ENCODE measurements at regions of chr1 and their contacts with region 1.

Region 1: GRCh38 chr1:66374561-66375111 is 159.3 kb upstream of the SGIP1 start:
- DNase-seq: no peak
- H3K4me3 Mint-ChIP-seq: peak overlapping the region; percentile 63
- H3K27ac Mint-ChIP-seq: peak overlapping the region; percentile 96
- H3K4me1 Mint-ChIP-seq: peaks cover 60% of the 10 kb centered on the region
- H3K27me3 Mint-ChIP-seq: no peaks in the 10 kb centered on the region

Region 2: GRCh38 chr1:65230731-65231481 is 1143.7 kb before region 1 on chr1:
- intact Hi-C with region 1: loop called (anchors 5 kb)
- DNase-seq: no peak
- H3K4me3 Mint-ChIP-seq: peak overlapping the region; percentile 26
- H3K27ac Mint-ChIP-seq: peak overlapping the region; percentile 79
- H3K4me1 Mint-ChIP-seq: peaks cover 34% of the 10 kb centered on the region
- H3K27me3 Mint-ChIP-seq: no peaks in the 10 kb centered on the region

Region 3: GRCh38 chr1:66242646-66243547 is 131.7 kb before region 1 on chr1:
- intact Hi-C with region 1: loop called (anchors 1 kb)
- DNase-seq: peak; percentile 61
- H3K4me3 Mint-ChIP-seq: no peak overlapping the region
- H3K27ac Mint-ChIP-seq: no peak overlapping the region
- H3K4me1 Mint-ChIP-seq: peaks cover 27% of the 10 kb centered on the region
- H3K27me3 Mint-ChIP-seq: peaks cover 12% of the 10 kb centered on the region

Region 4: GRCh38 chr1:66300972-66301451 is 73.6 kb before region 1 on chr1:
- intact Hi-C with region 1: loop called (anchors 1 kb)
- DNase-seq: peak; percentile 21
- H3K4me3 Mint-ChIP-seq: peak overlapping the region; percentile 68
- H3K27ac Mint-ChIP-seq: peak overlapping the region; percentile 82
- H3K4me1 Mint-ChIP-seq: peaks cover 40% of the 10 kb centered on the region
- H3K27me3 Mint-ChIP-seq: no peaks in the 10 kb centered on the region

Region 5: DNA sequence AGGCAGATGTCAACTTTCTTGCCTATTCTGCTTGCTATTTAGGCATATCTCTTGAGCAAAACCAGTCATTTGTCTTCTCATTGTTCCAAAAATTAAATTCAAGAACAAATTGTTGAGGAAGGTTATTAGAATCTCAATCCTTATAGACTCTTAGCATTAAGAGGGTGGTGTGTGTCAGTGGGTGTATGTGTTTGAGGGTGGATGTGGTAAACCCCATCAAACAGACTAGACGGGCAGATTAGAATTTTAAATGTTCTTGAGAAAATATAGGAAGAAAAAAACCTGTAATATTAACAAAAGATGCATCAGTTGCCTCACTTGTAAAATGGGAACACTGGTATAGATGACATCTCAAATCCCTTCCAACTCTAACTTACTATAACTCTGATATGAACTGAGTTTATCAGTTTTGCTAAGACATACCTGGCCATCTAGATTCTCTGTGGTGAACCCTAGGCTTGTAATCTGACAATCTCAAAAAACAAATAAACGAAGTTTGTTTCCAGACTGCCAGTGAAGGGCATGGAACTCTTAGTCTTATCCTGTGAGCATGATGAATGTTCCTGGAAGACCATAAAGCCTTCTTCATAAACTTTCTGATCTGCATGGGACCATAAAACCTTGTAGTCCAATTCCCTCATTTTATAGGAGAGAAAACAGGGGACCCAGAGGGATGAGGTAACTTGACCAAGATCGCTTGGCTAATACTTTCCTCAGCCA is 17.0 kb before region 1 on chr1:
- intact Hi-C with region 1: loop called (anchors 1 kb)
- DNase-seq: no peak
- H3K4me3 Mint-ChIP-seq: peak overlapping the region; percentile 5
- H3K27ac Mint-ChIP-seq: no peak overlapping the region
- H3K4me1 Mint-ChIP-seq: peaks cover 41% of the 10 kb centered on the region
- H3K27me3 Mint-ChIP-seq: peaks cover 3% of the 10 kb centered on the region

Region 6: GRCh38 chr1:66446261-66447001 is 71.8 kb after region 1 on chr1:
- intact Hi-C with region 1: loop called (anchors 1 kb)
- DNase-seq: peak; percentile 12
- H3K4me3 Mint-ChIP-seq: peak overlapping the region; percentile 1
- H3K27ac Mint-ChIP-seq: peak overlapping the region; percentile 96
- H3K4me1 Mint-ChIP-seq: peaks cover 28% of the 10 kb centered on the region
- H3K27me3 Mint-ChIP-seq: peaks cover 23% of the 10 kb centered on the region

Measured in activated T-helper 2 cell treated with anti-CD3 and anti-CD28 coated beads, Interferon-gamma antibody, Interleukin-2, Interleukin-4, amounts not matched to agents 10 μg/mL and 5 μg/mL and 100 μg/mL, durations not matched to agents 14 hours and 24 hours and 36 hours (primary cell).